Ascending aorta (tissue), 2 donors: ENCODE measurements at regions of chr1 and their contacts with region 1.

Region 1: DNA sequence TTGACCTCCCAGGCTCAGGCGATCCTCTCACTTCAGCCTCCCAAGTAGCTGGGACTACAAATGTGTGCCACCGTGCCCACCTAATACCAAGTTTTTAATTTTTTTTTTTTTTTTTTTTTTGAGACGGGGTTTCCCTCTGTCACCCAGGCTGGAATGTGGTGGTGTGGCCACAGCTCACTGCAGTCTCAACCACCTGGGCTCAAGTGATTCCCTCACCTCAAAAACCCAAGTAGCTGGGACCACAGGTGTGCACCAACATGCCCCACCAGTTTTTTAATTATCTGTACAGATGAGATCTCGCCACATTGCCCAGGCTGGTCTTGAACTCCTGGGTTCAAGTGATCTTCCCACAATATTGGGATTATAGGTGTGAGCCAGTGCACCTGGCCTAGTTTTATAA is 22.7 kb downstream of the PTP4A2 start:
- DNase-seq: no peak
- H3K4me3 ChIP-seq: no peak overlapping the region
- H3K27ac ChIP-seq: no peak overlapping the region
- H3K4me1 ChIP-seq: peaks cover 0 to 9% of the 10 kb centered on the region in 2 donors
- H3K27me3 ChIP-seq: no peaks in the 10 kb centered on the region
- CTCF ChIP-seq: no peak

Region 2: DNA sequence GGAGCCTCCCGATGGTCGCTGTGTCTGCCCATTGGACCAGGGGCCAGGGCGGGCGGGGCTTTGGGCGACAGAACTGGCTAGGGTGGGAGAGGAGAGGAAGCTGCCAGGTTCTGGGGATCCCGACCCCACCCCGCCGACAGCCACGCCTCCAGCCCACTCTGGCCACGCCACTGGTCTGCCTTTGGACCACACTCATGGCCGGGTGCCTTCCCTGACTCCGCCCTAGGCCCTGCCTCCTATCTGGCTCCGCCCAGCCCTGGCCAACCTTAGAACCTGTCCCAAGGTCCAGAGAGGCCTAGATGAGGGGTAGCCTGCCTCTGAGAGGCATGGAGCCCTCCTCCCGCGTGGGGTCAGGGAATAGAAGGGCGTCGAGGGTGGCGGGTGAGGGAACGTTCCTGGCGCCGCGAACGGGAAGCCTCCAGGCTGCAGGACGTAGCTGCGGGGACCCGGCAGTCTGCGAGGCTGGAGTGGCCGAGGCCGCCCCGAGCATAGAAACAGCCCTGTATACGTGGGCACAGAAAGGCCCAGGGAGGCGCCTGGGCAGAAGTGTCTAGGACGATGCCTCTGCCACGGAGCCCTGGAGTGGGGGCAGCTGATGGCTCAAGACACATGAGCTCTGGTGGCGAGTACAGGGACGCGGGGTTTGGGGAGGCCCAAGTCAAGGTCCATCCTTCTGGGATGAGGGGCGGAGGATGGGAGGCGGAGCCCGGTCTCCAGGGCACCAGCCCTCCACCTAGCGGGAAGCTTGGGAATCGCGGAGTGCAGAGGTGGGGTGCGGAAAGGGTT is 200.2 kb before region 1 on chr1:
- intact Hi-C with region 1: no loop called
- DNase-seq: peak; percentile 80 to 97
- H3K4me3 ChIP-seq: peak overlapping the region; percentile 46 to 64
- H3K27ac ChIP-seq: peak overlapping the region; percentile 96
- H3K4me1 ChIP-seq: peaks cover 17 to 39% of the 10 kb centered on the region in 2 donors
- H3K27me3 ChIP-seq: no peaks in the 10 kb centered on the region
- CTCF ChIP-seq: peak; percentile 85 to 95 (median 90)

Region 3: DNA sequence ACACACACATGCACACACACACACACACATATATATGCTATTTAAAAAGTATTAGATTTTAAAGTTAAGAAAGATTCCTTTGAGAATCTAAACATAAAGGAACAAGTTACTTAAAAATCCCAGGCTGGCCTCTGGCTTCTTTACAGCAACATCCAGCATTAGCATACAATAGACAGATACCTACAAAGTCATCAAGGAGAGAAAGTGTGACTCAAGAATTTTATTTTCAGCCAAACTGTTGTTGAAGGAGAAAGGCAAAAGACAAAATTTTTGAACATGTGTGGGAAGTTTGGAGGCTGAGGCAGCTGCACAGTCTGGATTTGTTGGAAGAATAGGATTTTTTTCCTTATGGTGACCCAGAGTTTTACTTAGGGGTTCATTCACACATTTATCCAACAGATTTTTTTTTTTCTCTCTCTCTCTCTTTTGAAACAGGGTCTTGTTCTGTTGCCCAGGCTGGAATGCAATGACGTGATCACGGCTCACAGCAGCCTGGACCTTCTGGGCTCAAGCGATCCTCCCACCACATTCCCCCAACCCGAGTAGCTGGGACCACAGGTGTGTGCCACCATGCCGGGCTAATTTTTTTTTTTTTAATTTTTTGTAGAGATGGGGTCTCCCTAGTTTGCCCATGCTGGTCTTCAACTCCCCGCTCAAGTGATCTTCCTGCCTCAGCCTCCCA is 75.6 kb before region 1 on chr1:
- intact Hi-C with region 1: loop called (anchors 5 kb)
- DNase-seq: no peak
- H3K4me3 ChIP-seq: no peak overlapping the region
- H3K27ac ChIP-seq: no peak overlapping the region
- H3K4me1 ChIP-seq: peaks cover 0 to 4% of the 10 kb centered on the region in 2 donors
- H3K27me3 ChIP-seq: no peaks in the 10 kb centered on the region
- CTCF ChIP-seq: no peak

Region 4: DNA sequence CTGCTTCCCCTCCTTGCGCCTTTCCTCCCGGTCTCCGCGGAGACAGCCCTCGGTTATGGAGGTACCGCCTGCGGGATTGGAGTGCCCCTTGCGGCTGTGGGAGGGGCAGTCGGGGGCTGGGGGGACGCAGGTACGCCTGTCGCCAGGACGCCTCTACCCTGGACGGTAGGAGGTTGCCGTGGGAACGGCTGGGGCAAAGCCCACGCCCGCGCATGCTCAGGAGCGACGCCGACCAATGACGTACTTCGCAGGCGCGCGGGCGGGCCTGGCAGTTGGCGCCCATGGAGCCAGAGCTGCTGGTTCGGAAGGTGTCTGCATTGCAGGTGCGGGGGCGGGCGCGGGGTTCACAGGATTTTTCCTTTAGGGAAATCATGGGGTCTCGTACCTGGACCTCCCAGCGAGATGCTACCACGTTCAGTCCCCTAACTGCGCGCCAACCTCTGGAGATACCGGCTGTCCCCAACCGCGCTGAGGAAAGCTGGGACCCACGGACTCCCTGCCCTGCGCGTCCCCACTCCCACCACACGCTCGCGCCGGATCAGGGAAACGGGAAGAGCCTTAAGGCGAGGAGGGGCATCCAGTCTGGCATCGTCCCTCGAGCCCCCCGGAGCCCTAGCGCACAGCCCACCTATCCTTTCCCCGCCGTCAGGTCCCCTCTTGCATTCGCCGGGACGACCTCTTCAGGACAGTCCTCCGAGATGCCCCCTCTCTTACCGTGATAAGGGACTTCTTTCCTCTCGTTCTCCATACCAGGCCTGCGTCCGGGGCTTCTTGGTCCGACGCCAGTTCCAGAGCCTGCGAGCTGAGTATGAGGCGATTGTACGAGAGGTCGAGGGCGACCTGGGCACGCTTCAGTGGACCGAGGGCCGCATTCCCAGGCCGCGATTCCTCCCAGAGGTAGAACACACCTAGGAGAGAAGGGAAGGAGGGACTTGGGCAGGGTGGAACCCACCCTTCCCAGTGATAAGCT is 290.2 kb after region 1 on chr1 and contains the start of gene IQCC:
- intact Hi-C with region 1: no loop called
- DNase-seq: peak; percentile 39 to 91
- H3K4me3 ChIP-seq: peak within 1 kb of the TSS; percentile 52 to 86
- H3K27ac ChIP-seq: peak within 1 kb of the TSS in 1 of 2 donors; percentile 22
- H3K4me1 ChIP-seq: peaks cover 0 to 15% of the 10 kb centered on the region in 2 donors
- H3K27me3 ChIP-seq: no peaks in the 10 kb centered on the region
- CTCF ChIP-seq: no peak
- total RNA-seq, gene IQCC: not detected